ENCODE measurements at regions of chr1 and their contacts with region 1.

Region 1: GRCh38 chr1:152089014-152089676 is at the start of gene TCHHL1:
- DNase-seq: no peak
- H3K4me3 Mint-ChIP-seq: no peak within 1 kb of the TSS
- H3K27ac Mint-ChIP-seq: no peak within 1 kb of the TSS
- H3K4me1 Mint-ChIP-seq: no peaks in the 10 kb centered on the region
- H3K27me3 Mint-ChIP-seq: peaks cover 29% of the 10 kb centered on the region
- total RNA-seq, gene TCHHL1: not detected in 2 replicates

Region 2: GRCh38 chr1:151980287-151981177 is 108.6 kb before region 1 on chr1:
- intact Hi-C with region 1: no loop called
- DNase-seq: no peak
- H3K4me3 Mint-ChIP-seq: no peak overlapping the region
- H3K27ac Mint-ChIP-seq: no peak overlapping the region
- H3K4me1 Mint-ChIP-seq: peaks cover 41% of the 10 kb centered on the region
- H3K27me3 Mint-ChIP-seq: peaks cover 6% of the 10 kb centered on the region

Region 3: DNA sequence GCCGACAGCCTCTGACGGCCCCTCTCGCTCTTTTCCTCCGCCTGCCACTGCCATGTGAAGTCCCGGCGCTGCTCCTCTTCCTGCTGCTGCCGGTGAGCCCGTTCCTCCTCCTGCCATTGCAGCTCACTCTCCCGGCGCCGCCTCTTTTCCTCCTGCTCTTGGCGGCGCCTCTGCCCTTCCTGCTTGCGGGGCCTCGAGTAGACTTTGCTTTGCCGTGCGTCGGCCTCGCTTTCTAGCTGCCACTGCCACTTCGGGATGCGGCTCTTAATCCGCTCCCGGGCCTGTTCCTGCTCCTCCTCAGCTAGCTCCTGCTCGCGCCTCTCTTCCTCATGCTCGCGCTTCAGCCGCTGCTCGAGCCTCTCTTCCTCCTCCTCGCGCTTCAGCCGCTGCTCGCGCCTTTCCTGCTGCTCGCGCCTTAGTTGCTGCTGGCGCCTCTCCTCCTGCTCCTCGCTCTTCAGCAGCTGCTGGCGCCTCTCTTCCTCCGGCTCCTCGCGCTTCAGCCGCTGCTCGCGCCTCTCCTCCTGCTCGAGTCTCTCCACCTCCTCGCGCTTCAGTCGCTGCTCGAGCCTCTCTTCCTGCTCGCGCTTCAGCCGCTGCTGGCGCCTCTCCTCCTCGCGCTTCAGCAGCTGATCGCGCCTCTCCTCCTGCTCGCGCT is 21.8 kb after region 1 on chr1:
- intact Hi-C with region 1: loop called (anchors 2 kb)
- DNase-seq: peak; percentile 5
- H3K4me3 Mint-ChIP-seq: no peak overlapping the region
- H3K27ac Mint-ChIP-seq: no peak overlapping the region
- H3K4me1 Mint-ChIP-seq: peaks cover 12% of the 10 kb centered on the region
- H3K27me3 Mint-ChIP-seq: peaks cover 24% of the 10 kb centered on the region